ENCODE measurements at regions of chr20 and their contacts with region 1.

Region 1: GRCh38 chr20:19826179-19826914 is 68.3 kb downstream of the RIN2 start:
- DNase-seq: no peak
- ATAC-seq: no peak
- H3K4me3 Mint-ChIP-seq: no peak overlapping the region
- H3K27ac Mint-ChIP-seq: no peak overlapping the region
- H3K4me1 Mint-ChIP-seq: peaks cover 6 to 27% (median 13%) of the 10 kb centered on the region in 4 donors
- H3K27me3 Mint-ChIP-seq: peaks cover 0 to 11% (median 0%) of the 10 kb centered on the region in 5 donors

Region 2: DNA sequence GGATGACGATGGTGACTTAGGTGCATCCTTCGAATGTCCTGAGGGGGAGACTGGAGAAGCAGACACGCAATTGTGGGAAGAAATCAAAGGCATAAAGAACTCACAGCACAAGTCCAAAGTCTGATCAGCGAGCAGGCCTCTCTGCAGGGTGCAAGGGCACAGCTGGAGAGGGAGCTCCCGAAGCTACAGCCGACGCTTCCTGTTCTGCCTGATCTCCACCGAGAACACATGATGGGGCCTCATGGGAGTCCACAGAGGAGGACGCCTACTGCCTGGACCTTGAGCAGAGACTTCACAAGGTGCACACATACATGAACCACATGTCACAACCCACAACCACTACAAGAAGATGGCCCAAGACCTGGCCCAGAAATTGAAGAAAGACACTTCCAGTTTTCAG is 16.8 kb before region 1 on chr20:
- POLR2A ChIA-PET with region 1: interaction called, 10 read pairs
- DNase-seq: peak in 1 of 10 donors; percentile 57
- ATAC-seq: no peak
- H3K4me3 Mint-ChIP-seq: no peak overlapping the region
- H3K27ac Mint-ChIP-seq: no peak overlapping the region
- H3K4me1 Mint-ChIP-seq: peaks cover 0 to 12% (median 0%) of the 10 kb centered on the region in 4 donors
- H3K27me3 Mint-ChIP-seq: peaks cover 3 to 21% (median 7%) of the 10 kb centered on the region in 5 donors